ENCODE measurements at regions of chr14 and their contacts with region 1.

Region 1: DNA sequence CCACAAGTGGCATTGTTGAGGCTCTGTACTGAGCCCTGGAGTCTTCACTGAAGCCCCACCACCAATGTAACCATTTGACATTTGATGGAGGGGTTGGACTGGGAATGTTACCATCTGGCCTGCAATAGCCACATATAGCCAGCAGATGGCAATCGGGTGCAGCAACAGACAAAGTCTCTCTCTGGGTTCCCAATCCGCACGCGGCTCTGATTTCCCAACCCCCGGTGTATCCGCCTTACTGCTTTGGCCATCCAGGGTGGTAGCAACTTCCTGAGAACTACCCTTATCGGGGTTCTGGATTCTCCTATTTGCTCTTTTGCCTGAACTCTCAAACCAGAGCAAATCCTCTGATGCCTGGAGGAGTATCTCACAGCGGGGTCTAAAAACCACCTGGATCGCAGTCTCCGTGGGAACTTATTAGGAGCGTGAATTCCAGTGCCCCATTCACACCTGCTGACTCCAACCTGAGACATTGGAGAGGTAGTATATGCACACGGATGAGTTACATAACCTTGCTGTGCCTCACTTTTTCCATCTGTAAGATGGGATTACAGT is 14.2 kb downstream of the VRTN start:
- DNase-seq: peak; percentile 85
- ATAC-seq: peak; percentile 93

Region 2: DNA sequence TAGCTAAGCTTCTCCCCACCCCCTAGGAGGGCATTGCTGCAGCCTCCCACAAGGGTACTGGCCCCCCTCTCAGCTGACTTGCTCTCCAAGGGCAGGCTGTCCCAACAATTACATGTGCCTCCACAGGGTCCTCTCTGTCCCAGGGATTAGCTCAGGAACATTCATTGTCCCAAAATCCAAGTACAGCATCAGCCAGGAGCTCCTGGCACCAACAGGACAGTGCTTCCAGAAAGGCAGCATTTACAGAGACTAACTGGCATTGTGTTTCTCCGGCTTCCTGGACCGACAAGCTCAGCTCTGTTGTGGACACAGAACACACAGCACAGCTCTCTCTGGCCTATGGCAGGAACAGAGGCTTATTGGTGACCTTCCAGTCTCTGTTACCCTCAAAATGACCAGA is 81.4 kb before region 1 on chr14:
- intact Hi-C with region 1: no loop called
- DNase-seq: no peak
- ATAC-seq: no peak

Region 3: GRCh38 chr14:74478996-74479635 is 116.7 kb after region 1 on chr14:
- intact Hi-C with region 1: loop called (anchors 5 kb)
- DNase-seq: no peak
- ATAC-seq: no peak

Measured in Right ventricle myocardium superior (tissue), 1 donor.